Psoas muscle (tissue), 8 donors: ENCODE measurements at regions of chr5 and their contacts with region 1.

Region 1: DNA sequence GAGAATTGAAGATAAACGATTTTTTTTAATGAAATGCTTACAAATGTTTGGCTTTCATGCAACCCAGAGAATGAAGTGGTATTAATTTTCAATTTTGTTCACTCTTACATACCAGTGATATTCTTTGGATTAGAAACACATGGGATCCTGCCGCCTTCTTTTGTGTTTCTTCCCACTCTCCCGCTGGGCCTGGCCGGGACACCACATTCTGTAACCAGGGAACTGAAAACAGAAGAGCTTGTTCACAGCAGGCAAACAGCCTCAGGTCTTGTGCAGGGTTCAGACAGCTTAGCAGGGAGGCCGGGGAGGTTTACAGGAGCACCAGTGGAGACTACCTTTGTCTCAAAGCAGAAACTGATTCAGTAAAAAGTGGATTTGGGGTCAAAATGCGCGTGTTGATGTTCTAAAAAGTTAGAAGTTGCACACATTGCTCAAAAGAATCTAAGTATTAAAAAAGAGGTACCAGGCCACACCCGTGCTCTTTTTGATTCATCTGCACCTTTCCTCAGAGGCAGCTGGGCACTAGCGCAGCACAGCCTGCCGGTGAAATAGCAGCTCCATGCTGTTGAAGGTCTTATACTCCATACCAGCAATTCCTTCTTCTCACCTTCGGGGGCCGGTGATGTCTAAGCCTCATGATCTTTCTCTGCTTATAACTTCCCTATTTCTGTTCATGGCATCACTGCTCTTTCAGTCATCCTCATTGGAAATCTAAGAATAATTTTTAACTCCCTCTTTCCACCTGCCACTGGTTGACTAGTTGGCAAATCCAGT is 67.1 kb downstream of the GRAMD2B start:
- DNase-seq: no peak
- ATAC-seq: no peak
- H3K4me3 ChIP-seq: no peak overlapping the region
- H3K27ac ChIP-seq: no peak overlapping the region
- H3K4me1 ChIP-seq: no peaks in the 10 kb centered on the region
- H3K27me3 ChIP-seq: no peaks in the 10 kb centered on the region
- CTCF ChIP-seq: no peak

Region 2: GRCh38 chr5:126536874-126537273 is 46.5 kb after region 1 on chr5:
- intact Hi-C with region 1: loop called in 1 of 2 experiments (anchors 5 kb)
- DNase-seq: no peak
- ATAC-seq: no peak
- H3K4me3 ChIP-seq: no peak overlapping the region
- H3K27ac ChIP-seq: no peak overlapping the region
- H3K4me1 ChIP-seq: no peaks in the 10 kb centered on the region
- H3K27me3 ChIP-seq: no peaks in the 10 kb centered on the region
- CTCF ChIP-seq: no peak